ENCODE measurements at regions of chr1 and their contacts with region 1.

Region 1: DNA sequence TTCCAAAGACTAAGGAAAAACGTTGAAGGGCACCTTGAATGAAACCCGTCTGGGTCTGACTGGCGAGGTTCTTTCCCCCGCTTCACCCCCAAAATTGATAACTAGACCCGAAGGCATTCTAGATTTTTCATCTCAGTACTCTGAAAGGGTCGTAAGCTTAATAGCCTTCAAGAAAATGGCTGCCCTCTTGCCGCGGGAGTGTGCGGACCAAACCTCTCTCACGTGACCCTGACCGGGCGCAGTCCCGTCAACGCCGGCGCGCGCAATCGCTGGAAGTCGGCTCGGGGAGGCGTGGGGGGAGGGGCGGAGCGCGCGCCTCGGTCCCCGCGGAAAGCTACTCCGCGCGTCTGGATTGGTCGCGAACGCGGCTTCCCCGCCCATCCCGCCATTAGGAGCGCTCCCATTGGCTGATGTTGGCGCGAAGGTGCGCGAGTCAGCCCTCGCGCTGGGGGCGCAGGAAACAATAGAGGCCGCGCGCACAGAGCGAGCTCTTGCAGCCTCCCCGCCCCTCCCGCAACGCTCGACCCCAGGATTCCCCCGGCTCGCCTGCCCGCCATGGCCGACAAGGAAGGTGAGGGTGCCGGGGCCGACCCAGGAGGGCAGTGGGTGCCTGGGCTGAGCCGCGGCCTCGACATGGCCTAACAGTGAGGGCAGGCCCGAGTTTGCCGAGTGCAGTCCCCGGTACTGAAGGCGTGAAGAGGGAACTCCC is at the start of gene RBBP4:
- DNase-seq: peak; percentile 98
- H3K4me3 ChIP-seq: peak within 1 kb of the TSS; percentile 82
- H3K27ac ChIP-seq: peak within 1 kb of the TSS; percentile 96
- H3K4me1 ChIP-seq: peaks cover 61% of the 10 kb centered on the region
- CTCF ChIP-seq: no peak
- total RNA-seq, gene RBBP4: 353 and 393 TPM in 2 replicates

Region 2: GRCh38 chr1:32508751-32509140 is 142.2 kb before region 1 on chr1:
- CTCF ChIA-PET with region 1: no interaction called
- POLR2A ChIA-PET with region 1: no interaction called
- intact Hi-C with region 1: no loop called
- DNase-seq: no peak
- H3K4me3 ChIP-seq: no peak overlapping the region
- H3K27ac ChIP-seq: no peak overlapping the region
- H3K4me1 ChIP-seq: no peaks in the 10 kb centered on the region
- CTCF ChIP-seq: no peak

Region 3: DNA sequence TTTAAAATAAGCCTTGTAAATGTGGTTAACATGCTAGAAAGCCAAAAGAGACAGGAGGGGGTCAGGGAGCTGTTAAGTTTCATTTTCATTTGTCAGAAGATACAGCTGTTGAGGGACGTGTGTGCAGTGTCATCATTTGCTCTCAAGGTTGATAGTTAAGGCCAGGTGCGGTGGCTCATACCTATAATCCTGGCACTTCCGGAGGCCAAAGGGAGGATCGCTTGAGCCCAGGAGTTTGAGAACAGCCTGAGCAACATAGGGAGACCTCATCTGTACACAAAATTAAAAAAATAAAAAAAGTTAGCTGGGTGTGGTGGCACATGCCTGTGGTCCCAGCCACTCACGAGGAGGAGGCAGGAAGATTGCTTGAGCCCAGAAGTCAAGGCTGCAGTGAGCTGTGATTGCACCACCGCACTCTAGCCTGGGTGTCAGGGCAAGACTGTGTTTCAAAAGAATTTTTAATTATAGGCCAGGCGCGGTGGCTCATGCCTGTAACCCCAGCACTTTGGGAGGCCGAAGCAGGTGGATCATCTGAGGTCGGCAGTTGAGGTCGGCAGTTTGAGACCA is 23.2 kb before region 1 on chr1:
- CTCF ChIA-PET with region 1: no interaction called
- POLR2A ChIA-PET with region 1: interaction called, 11 read pairs
- intact Hi-C with region 1: loop called (anchors 1 kb)
- DNase-seq: peak; percentile 84
- H3K4me3 ChIP-seq: peak overlapping the region; percentile 31
- H3K27ac ChIP-seq: peak overlapping the region; percentile 89
- H3K4me1 ChIP-seq: peaks cover 63% of the 10 kb centered on the region
- CTCF ChIP-seq: no peak